Colonic mucosa (tissue), 4 donors: ENCODE measurements at regions of chr5 and their contacts with region 1.

Region 1: DNA sequence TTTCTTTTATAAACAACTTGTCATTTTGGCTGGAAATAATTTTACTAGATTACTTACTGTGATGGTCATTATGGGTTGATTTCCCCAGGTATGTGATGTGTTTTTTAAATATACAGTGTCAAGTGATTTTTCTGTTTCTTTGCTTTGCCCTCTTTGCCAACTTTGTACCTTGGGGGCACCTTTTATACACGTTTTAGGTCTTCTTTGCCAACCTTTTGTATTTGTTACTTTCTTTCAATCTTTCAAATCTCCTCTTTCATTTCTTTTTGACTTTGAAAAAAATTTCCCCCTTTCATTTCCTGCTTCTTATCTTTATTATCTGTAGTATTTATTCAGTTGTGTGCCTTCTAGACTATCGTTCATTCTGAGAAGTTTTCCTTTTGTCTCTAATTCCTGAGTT is 65.4 kb upstream of the DHFR start:
- DNase-seq: no peak
- H3K4me3 ChIP-seq: no peak overlapping the region
- H3K27ac ChIP-seq: no peak overlapping the region
- H3K4me1 ChIP-seq: no peaks in the 10 kb centered on the region
- H3K27me3 ChIP-seq: no peaks in the 10 kb centered on the region
- CTCF ChIP-seq: no peak

Region 2: DNA sequence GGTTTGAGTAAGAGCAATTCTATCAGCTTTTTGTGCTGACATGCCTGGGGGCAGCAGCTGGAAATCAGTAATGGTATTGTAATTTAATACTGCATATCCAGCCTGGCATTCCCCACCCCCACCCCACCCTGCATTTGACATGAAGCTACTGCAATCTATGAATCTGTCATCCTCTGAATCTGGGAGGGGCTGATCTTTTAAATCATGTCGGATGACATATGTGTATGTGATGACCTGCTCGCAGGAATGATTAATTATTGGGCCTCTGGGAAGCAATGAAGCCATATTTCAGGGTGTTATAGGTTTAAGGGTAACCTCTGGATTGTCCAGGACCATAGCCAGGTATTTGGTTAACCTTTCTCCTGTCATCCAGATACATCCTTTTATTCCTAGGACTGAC is 175.3 kb after region 1 on chr5:
- intact Hi-C with region 1: no loop called
- DNase-seq: no peak
- H3K4me3 ChIP-seq: no peak overlapping the region
- H3K27ac ChIP-seq: no peak overlapping the region
- H3K4me1 ChIP-seq: no peaks in the 10 kb centered on the region
- H3K27me3 ChIP-seq: no peaks in the 10 kb centered on the region
- CTCF ChIP-seq: no peak

Region 3: DNA sequence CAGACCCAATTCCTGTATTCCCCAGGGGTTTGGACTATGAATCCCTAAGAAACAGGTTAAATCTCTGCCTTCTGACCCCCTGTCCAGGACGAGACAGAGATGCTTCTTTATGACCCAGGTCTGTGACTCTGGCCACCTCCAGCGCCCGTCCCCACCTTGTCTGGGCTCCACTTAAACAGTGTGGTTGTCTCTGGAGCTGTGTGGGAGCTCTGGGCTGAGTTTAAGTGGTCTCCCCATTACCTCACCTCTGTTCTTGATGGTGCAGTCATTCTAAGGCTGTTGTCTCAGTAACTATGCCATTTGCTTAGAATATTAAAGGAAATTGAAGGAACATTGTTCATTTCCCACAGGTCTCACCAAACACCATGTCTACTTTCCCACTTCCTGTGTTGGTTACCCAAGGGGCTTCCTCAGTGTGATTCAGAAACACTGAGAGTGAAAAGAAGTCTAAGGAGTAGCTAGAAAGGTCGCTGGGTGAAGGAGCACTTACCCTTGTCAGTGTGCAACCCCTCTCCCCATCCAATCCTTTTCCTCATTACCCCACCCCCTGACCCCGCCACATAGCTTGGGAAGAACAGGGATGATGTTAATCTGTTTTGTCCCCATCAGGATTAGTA is 385.2 kb after region 1 on chr5:
- intact Hi-C with region 1: loop called (anchors 10 kb)
- DNase-seq: no peak
- H3K4me3 ChIP-seq: no peak overlapping the region
- H3K27ac ChIP-seq: no peak overlapping the region
- H3K4me1 ChIP-seq: no peaks in the 10 kb centered on the region
- H3K27me3 ChIP-seq: no peaks in the 10 kb centered on the region
- CTCF ChIP-seq: no peak